ENCODE measurements at regions of chr12 and their contacts with region 1.

Region 1: DNA sequence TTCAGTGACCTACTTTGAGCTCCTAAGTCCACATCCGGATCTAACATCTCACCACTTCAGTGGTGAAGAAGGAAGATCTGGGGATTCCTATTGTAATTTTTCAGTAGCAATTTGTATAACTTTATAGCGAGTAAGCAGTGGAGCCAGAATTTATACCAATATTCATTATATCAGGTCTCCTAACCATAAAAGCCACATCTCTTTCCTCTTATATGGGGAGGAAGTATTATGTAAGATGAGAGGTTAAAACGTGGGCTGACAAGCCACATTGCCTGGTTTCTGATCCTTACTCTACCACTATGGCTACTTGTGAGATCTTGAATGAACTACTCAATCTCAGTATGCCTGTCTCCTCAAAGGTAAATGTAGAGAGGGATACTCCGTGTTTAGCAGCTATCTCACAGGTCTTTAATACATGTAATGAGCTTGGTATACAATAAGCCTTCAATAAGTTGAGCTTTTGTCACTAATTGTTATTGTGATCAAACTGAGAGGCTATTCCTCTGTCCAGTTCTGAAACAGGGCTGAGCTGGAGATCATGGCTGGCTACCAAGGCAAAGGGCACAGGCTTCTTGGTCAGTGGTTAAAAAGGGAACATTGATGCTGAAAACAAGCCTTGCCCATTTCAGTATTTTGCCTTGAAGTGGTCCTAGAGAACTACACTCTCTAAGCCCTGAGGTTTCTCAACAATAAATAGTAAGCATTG is 3.3 kb upstream of the TMEM117 start:
- DNase-seq: no peak
- H3K4me3 ChIP-seq: no peak overlapping the region
- H3K27me3 ChIP-seq: no peaks in the 10 kb centered on the region
- CTCF ChIP-seq: no peak

Region 2: DNA sequence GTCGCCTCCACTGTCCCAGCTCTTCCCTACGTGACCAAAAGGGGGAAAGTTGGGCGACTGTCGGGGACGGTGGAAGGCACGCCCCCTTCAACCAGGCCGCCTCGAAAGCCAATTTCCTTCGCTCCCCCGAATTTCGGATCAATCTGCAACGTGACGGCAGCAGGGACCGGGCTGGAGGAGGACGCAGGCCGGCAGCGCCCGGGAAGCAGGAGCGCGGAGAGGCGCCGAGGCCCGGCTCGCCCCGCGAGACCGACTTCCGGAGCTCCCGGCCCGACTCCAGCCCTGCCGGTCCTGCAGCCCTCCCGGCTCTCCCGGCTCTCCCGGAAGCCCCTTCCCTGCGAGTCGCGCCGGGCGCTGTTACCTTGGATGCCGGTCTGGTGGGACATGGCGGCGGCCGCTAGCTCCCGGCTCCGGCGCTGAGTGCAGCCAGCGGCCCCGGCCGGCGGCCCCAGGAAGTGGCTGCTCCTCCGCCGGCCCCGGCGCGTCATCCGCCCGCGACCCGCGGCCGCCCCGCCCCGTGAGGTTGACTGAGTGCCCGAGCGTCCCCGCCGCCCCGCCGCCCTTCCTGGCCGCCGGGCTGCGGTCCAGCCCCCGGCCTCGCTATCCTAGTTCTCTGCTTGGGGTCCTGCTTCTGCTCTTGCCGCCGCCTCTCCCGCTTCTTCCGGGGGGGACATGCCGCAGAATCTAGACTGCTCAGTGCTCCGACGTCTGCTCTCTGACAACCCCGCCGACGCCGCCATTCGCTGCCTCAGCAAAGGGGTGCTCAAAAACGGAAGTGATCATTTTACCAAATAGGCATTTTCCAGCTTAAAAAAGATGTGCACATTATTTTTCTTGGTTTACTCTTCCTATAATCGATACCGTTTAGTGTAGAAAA is 26.5 kb before region 1 on chr12 and contains the start of gene TWF1:
- CTCF ChIA-PET with region 1: no interaction called
- POLR2A ChIA-PET with region 1: no interaction called
- DNase-seq: no peak
- H3K4me3 ChIP-seq: peak within 1 kb of the TSS; percentile 87
- H3K27me3 ChIP-seq: 0 out of 2 replicates have a peak, but pooled peaks cover 1% of the 10 kb centered on the region
- CTCF ChIP-seq: peak; percentile 36; the same call in 1 of the 2 replicates
- polyA plus RNA-seq, gene TWF1: 49.8 and 109 TPM in 2 replicates

Region 3: GRCh38 chr12:43848786-43849185 is 16.2 kb after region 1 on chr12:
- CTCF ChIA-PET with region 1: no interaction called
- POLR2A ChIA-PET with region 1: no interaction called
- DNase-seq: no peak
- H3K4me3 ChIP-seq: no peak overlapping the region
- H3K27me3 ChIP-seq: no peaks in the 10 kb centered on the region
- CTCF ChIP-seq: no peak

Region 4: DNA sequence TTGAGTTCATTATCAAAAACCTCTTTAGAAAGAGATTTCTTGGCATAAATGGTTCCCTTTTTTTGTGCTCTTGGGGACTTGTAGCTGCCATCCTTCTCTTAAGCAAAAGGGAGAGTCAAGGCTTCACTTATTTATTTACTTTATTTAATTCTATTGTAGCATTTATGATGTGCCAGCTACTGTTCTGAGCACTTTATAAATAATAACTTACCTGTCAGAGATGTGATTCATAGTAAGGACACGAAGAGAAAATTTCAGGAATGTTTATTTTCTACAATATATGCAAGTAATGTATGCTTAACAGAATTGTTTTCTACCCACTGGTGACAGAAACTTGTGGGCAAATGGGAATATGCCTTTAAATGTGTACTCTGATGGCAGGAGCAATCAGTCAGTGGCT is 36.6 kb after region 1 on chr12:
- CTCF ChIA-PET with region 1: interaction called, 3 read pairs
- POLR2A ChIA-PET with region 1: interaction called, 11 read pairs
- DNase-seq: no peak
- H3K4me3 ChIP-seq: no peak overlapping the region
- H3K27me3 ChIP-seq: no peaks in the 10 kb centered on the region
- CTCF ChIP-seq: no peak

Region 5: DNA sequence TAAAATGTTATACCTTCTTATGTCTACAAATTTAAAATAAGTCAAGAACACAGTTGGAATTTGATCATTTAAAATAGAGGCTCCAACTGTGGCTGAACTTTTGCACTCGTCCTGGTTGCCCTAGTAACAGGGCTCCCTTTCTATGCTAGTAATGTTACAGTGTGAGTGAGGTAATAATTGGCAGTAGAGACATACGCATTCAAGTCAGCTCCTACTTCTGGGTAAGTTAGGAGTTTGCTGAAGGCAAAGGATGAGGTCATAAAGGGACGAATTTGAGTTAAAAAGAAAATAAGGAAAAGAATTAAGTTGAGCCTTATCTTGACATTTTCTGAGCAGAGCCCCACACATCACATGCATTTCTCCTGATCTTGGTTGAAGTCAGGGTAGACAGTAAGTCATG is 132.3 kb after region 1 on chr12:
- CTCF ChIA-PET with region 1: no interaction called
- POLR2A ChIA-PET with region 1: no interaction called
- DNase-seq: no peak
- H3K4me3 ChIP-seq: no peak overlapping the region
- H3K27me3 ChIP-seq: no peaks in the 10 kb centered on the region
- CTCF ChIP-seq: no peak